ENCODE measurements at regions of chr2 and their contacts with region 1.

Region 1: GRCh38 chr2:24075915-24076848 is at the start of gene SF3B6:
- DNase-seq: peak; percentile 88 to 99 (median 97)
- H3K4me3 ChIP-seq: peak within 1 kb of the TSS; percentile 57 to 100 (median 91)
- H3K27ac ChIP-seq: peak within 1 kb of the TSS; percentile 46 to 96 (median 90)
- H3K27me3 ChIP-seq: no peaks in the 10 kb centered on the region
- CTCF ChIP-seq: peak in 48 of 56 donors; percentile 13 to 68 (median 30)
- total RNA-seq, gene SF3B6: 23.9 to 55.1 (median 35.5) TPM

Region 2: GRCh38 chr2:23939987-23940717 is 136.0 kb before region 1 on chr2 and contains the start of gene UBXN2A:
- intact Hi-C with region 1: loop called in 1 of 2 experiments (anchors 5 kb)
- DNase-seq: peak; percentile 45 to 87 (median 63)
- H3K4me3 ChIP-seq: peak within 1 kb of the TSS; percentile 64 to 99 (median 87)
- H3K27ac ChIP-seq: peak within 1 kb of the TSS in 57 of 59 donors; percentile 23 to 94 (median 82)
- H3K27me3 ChIP-seq: no peaks in the 10 kb centered on the region
- CTCF ChIP-seq: peak in 4 of 56 donors; percentile 11 to 26 (median 18)
- total RNA-seq, gene UBXN2A: 14.4 to 32.7 (median 20.0) TPM

Region 3: DNA sequence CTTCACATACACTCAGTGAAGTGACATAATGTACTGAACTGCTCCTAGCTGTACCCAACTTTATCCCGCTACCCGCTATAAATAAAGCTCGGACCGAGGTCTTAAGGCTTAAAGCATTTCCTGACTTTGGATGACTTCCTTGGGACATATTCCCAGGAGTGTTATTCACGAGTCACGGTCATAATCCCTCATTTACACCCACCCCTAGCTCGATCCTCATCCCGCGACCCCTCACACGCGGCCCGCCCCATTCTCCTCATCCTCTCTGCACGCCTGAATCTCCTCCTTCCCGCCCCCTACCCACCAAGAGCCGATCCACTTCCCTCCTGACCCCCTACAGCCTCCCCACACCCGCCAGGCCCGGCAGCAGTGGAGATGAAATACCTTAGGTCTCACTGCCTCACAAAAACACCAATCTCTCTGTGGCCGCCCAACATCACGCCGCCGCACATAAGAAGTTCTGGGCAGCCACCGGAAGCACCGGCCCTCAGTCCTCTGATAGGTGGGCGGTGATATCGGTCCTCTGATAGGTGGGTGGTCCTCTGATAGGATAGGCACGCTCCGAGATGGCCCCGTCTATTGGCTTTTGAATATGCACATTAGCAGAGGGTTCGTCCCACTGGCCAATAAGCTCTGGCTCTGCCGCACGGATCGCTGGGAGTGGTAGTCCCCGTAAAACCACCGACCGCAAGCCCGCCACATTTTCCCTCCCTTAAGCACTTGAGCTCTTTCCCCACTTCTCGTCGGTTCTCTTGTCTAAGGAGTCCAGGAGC is 29.1 kb before region 1 on chr2 and contains the start of gene WDCP:
- intact Hi-C with region 1: loop called (anchors 1 to 2 kb)
- DNase-seq: peak; percentile 90 to 100 (median 98)
- H3K4me3 ChIP-seq: peak within 1 kb of the TSS; percentile 40 to 93 (median 80)
- H3K27ac ChIP-seq: peak within 1 kb of the TSS in 40 of 59 donors; percentile 3 to 85 (median 62)
- H3K27me3 ChIP-seq: no peaks in the 10 kb centered on the region
- CTCF ChIP-seq: peak in 18 of 56 donors; percentile 4 to 46 (median 20)
- total RNA-seq, gene WDCP: 5.7 to 17.2 (median 10.7) TPM

Region 4: GRCh38 chr2:24123195-24123921 is 47.2 kb after region 1 on chr2 and contains the starts of genes FAM228B and PFN4:
- intact Hi-C with region 1: loop called in 1 of 2 experiments (anchors 5 kb)
- DNase-seq: peak; percentile 69 to 93 (median 86)
- H3K4me3 ChIP-seq: peak within 1 kb of the TSS; percentile 53 to 89 (median 77)
- H3K27ac ChIP-seq: peak within 1 kb of the TSS; percentile 80 to 98 (median 94)
- H3K27me3 ChIP-seq: no peaks in the 10 kb centered on the region
- CTCF ChIP-seq: peak in 27 of 56 donors; percentile 3 to 46 (median 21)
- total RNA-seq, gene FAM228B: 55.2 to 109 (median 79.9) TPM
- total RNA-seq, gene PFN4: 0.43 to 2.6 (median 0.97) TPM in 60 of 120 experiments, not detected in the others

Region 5: DNA sequence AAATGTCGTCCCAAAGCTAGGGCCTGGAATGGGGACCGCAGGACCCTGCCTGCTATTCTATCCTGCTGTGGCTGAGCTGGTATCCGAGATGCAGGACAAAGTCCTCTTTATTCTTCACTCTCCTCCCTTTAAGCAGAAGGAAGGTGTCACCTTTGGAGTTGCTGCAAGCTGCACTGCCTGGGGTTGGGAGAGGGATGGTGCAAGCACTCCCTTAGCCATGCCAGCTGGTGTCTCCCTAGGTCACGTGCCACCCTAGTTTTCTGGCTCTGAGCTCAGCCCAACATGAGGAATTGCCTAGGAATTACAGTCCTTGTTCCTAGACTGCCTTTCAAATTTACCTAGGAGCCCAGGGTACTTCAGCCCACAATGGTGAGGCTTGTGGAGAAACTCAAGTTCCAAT is 77.3 kb after region 1 on chr2:
- intact Hi-C with region 1: no loop called
- DNase-seq: no peak
- H3K4me3 ChIP-seq: no peak overlapping the region
- H3K27ac ChIP-seq: no peak overlapping the region
- H3K27me3 ChIP-seq: no peaks in the 10 kb centered on the region
- CTCF ChIP-seq: no peak

Region 6: DNA sequence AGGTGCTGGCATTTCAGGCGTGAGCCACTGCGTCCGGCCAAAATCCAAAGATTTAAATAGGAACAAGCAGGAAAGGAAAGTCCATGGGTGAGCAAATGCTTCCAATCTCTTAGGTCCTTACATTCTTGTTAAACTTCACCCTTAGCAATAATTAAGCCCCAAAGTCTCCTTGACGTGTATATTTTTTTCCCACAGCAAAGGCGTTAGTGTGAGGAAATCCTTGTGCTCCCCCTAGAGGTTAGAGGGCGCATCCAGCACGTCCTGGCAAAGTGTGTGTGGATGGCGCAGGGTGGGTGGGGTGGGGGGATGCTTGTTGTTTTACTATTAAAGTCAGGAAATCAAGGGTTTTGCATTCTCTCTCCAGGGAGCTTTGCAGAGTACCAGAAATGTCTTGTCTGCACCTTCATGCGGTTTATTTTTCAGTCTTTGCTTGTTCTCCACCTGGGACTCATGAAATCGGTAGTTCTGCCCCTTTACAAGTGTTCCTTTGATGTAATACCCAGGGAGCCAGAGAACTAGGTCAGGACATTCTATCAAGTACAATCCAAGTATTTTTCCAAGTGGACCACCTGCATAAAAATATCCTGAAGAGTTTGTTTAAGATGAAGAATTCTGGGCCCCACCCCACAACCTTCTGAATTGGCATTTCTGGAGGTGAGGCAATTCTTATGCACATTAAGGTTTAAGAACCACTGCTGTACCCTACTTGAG is 306.3 kb after region 1 on chr2:
- intact Hi-C with region 1: loop called in 1 of 2 experiments (anchors 5 kb)
- DNase-seq: peak in 7 of 10 donors; percentile 30 to 54 (median 53)
- H3K4me3 ChIP-seq: peak overlapping the region in 11 of 59 donors; percentile 11 to 38 (median 20)
- H3K27ac ChIP-seq: peak overlapping the region in 8 of 59 donors; percentile 19 to 65 (median 42)
- H3K27me3 ChIP-seq: no peaks in the 10 kb centered on the region
- CTCF ChIP-seq: peak; percentile 30 to 86 (median 75)